ENCODE measurements at regions of chr12 and their contacts with region 1.

Region 1: GRCh38 chr12:109995686-109996482 is at the start of gene GIT2:
- DNase-seq: peak; percentile 90 to 96 (median 95)
- H3K4me3 ChIP-seq: peak within 1 kb of the TSS; percentile 68 to 100 (median 98)
- H3K27ac ChIP-seq: peak within 1 kb of the TSS in 58 of 59 donors; percentile 4 to 95 (median 81)
- H3K27me3 ChIP-seq: no peaks in the 10 kb centered on the region
- CTCF ChIP-seq: peak in 49 of 56 donors; percentile 13 to 68 (median 39)
- total RNA-seq, gene GIT2: 54.2 to 101 (median 79.0) TPM

Region 2: DNA sequence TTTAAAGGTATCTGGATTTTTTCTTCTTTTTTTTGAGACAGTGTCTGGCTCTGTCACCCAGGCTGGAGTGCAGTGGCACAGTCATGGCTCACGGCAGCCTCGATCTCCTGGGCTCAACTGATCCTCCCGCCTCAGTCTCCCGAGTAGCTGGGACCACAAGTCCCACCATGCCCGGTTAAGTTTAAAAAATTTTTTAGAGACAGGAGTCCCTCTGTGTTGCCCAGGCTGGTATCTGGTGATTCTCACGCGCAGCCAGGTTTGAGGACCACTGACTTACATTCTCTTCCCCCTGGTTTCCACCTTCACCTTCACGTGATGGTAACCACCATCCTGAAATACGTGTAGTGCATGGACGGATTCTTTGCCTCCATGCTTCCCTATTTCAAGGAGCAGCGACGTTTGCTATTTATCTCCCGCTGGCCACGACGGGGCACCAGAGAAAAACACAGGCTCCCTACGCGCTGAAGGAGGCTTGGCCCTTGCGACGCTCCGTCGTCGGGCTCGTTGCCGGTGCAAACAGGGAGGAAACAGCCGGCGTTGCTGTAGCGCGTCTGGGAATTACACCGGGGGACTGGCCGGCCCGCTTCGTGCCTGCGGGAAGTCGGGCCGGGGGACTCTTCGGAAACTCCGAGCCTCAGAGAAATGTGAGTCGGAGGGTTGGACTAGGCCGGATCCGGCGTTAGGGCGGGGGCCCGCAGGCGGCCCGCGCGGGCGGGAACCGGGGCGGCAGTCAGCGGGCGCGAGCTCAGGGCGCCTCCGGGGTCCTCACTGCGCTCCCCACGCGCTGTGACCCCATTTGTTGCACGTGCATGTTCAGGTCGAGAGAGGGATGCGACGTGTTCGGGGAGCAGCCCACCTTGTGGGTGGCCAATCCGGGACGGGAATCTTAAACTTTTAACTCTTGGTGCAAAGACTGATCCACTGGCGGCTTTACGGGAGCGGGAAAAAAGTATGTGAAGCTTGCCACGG is 95.8 kb before region 1 on chr12 and contains the start of gene TCHP:
- intact Hi-C with region 1: loop called (anchors 5 kb)
- DNase-seq: peak; percentile 80 to 91 (median 88)
- H3K4me3 ChIP-seq: peak within 1 kb of the TSS; percentile 64 to 99 (median 88)
- H3K27ac ChIP-seq: peak within 1 kb of the TSS in 57 of 59 donors; percentile 33 to 91 (median 79)
- H3K27me3 ChIP-seq: no peaks in the 10 kb centered on the region
- CTCF ChIP-seq: peak; percentile 22 to 75 (median 60)
- total RNA-seq, gene TCHP: 18.4 to 41.8 (median 27.7) TPM

Region 3: GRCh38 chr12:110039085-110039807 is 43.4 kb after region 1 on chr12:
- intact Hi-C with region 1: loop called in 1 of 2 experiments (anchors 5 kb)
- DNase-seq: no peak
- H3K4me3 ChIP-seq: peak overlapping the region in 2 of 59 donors; percentile 2 to 5
- H3K27ac ChIP-seq: peak overlapping the region; percentile 27 to 95 (median 89)
- H3K27me3 ChIP-seq: no peaks in the 10 kb centered on the region
- CTCF ChIP-seq: no peak

Measured in dorsolateral prefrontal cortex (tissue), 120 donors.